Ascending aorta (tissue), 2 donors: ENCODE measurements at regions of chr1 and their contacts with region 1.

Region 1: DNA sequence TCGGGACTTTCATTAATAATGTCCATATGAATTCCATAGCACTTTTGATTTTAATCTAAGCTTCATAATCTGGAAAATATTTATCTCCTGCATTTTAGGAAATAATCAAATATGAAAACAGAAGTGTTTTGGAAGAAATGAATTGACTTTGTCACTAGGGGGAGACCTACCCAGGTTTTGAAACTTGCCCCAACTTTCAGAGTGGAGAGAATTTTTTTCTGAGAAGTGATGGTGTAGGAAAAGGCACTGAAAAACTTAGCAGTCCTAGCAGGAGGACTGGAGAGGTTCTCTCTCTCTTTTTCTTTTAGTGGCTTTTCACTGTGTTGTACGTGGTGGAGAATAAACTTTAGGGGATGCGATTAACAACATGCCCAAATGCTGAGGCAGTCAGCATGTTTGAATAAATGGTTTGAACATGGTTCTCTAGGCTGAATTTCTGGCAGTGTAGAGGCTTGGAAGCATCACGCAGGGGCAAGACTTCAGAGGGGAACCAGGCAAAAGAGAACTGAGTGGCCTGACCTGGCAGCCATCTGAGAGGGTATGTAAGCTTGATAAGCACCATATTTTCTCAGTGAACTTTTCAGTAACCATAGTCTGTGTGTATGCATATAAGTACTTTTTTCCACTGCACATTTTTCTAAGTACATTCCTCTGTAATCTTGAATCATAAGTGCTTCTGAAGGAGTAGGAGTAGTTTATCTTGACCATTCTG is 68.3 kb upstream of the NEK7 start:
- DNase-seq: no peak
- H3K4me3 ChIP-seq: no peak overlapping the region
- H3K27ac ChIP-seq: no peak overlapping the region
- H3K4me1 ChIP-seq: peaks cover 0 to 2% of the 10 kb centered on the region in 2 donors
- H3K27me3 ChIP-seq: no peaks in the 10 kb centered on the region
- CTCF ChIP-seq: peak; percentile 38 to 74 (median 45)

Region 2: DNA sequence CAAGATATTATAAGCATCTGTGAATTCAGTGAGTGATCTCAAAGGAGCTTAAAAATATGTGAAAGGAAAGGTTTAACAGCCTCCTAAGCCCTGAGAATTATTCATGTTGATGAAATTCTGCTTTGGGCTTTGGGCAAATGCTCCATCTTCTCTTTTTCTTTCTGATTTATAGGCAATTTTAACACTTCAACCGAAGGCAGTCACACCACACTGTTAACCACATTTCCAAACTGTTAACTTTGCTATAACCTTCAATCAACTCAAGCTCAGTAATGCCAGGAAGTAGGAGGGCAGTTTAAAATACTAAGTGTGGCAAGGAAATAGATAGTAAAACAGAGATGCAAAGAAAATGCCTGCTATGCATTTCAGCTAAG is 13.9 kb after region 1 on chr1:
- intact Hi-C with region 1: no loop called
- DNase-seq: no peak
- H3K4me3 ChIP-seq: no peak overlapping the region
- H3K27ac ChIP-seq: peak overlapping the region in 1 of 2 donors; percentile 41
- H3K4me1 ChIP-seq: no peaks in the 10 kb centered on the region
- H3K27me3 ChIP-seq: no peaks in the 10 kb centered on the region
- CTCF ChIP-seq: no peak

Region 3: GRCh38 chr1:198212637-198213036 is 124.1 kb after region 1 on chr1:
- intact Hi-C with region 1: no loop called
- DNase-seq: no peak
- H3K4me3 ChIP-seq: no peak overlapping the region
- H3K27ac ChIP-seq: no peak overlapping the region
- H3K4me1 ChIP-seq: no peaks in the 10 kb centered on the region
- H3K27me3 ChIP-seq: no peaks in the 10 kb centered on the region
- CTCF ChIP-seq: no peak

Region 4: DNA sequence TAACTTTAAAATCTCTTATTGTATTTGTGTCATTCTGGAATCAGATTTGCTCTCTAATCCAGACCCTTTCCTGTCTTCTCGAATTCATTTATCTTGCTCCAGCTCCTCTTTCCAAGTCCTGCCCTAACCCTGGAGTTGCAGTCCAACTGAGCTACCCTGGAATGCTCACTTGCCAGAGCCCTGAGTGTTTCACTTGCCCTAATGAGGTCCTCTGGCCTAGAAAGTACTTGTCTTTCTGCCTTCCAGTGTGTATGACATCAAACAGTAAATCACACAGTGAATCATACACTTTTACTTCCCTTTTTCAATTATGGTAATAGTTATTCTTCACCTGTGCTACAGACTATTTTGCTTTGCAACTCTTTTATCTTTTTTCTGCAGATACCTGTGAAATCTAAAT is 165.2 kb after region 1 on chr1:
- intact Hi-C with region 1: loop called (anchors 10 kb)
- DNase-seq: no peak
- H3K4me3 ChIP-seq: no peak overlapping the region
- H3K27ac ChIP-seq: peak overlapping the region in 1 of 2 donors; percentile 41
- H3K4me1 ChIP-seq: peaks cover 0 to 7% of the 10 kb centered on the region in 2 donors
- H3K27me3 ChIP-seq: no peaks in the 10 kb centered on the region
- CTCF ChIP-seq: no peak

Region 5: GRCh38 chr1:198359024-198359653 is 270.6 kb after region 1 on chr1:
- intact Hi-C with region 1: loop called (anchors 2 kb)
- DNase-seq: no peak
- H3K4me3 ChIP-seq: no peak overlapping the region
- H3K27ac ChIP-seq: no peak overlapping the region
- H3K4me1 ChIP-seq: no peaks in the 10 kb centered on the region
- H3K27me3 ChIP-seq: no peaks in the 10 kb centered on the region
- CTCF ChIP-seq: peak; percentile 21 to 51 (median 22)

Region 6: GRCh38 chr1:199742547-199742946 is 1654.0 kb after region 1 on chr1:
- intact Hi-C with region 1: no loop called
- DNase-seq: no peak
- H3K4me3 ChIP-seq: no peak overlapping the region
- H3K27ac ChIP-seq: no peak overlapping the region
- H3K4me1 ChIP-seq: no peaks in the 10 kb centered on the region
- H3K27me3 ChIP-seq: no peaks in the 10 kb centered on the region
- CTCF ChIP-seq: no peak